ENCODE measurements at regions of chr11 and their contacts with region 1.

Region 1: DNA sequence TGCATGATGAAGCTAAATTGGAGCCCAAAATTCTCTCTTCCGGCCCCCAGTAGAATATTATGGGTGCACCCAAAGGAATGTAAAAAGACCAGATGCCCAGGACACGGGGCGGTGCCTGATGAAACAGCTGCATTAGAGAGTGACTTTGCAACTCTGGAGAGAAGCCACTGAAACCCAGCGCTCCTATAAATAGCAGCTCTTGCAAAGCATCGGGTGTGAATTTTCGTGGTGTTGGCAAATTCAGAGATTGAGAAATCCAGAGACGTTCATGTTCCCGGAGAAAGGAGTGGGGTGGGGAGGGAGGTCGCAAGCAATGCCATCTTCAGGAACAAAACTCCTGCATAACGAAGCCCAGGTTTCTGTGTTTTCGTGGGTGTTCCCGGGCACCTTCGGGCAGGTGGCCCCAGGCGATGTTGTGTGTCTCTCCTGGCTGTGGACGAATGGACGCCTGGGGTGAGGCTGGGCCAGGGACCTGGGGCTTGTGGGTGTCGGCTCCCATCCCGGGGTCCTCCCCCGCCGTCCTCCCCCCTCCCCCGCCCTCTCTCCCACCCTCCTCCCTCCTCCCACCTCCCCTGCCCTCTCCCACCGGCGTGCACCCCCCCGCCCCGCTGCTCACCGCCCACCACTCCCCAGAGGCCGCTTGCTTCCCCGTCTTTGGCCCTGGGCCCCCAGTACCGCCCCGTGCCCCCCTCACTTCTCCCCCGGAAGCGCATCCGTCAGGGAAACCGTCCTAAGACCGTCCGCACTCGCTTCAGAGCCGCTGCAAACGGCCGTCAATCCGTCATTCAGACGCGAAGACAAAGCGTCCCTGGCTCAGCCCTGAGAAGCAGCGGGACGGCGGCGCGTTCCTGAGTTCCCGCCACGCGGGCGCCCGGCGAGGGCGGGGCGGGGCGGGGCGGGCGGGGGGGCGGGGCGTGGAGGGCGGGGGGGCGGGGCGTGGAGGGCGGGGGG is 26.7 kb upstream of the TOLLIP start:
- DNase-seq: peak in 6 of 10 donors; percentile 56 to 79 (median 64)
- H3K4me3 ChIP-seq: peak overlapping the region; percentile 30 to 73 (median 57)
- H3K27ac ChIP-seq: peak overlapping the region in 48 of 59 donors; percentile 22 to 90 (median 75)
- H3K27me3 ChIP-seq: no peaks in the 10 kb centered on the region
- CTCF ChIP-seq: no peak

Region 2: DNA sequence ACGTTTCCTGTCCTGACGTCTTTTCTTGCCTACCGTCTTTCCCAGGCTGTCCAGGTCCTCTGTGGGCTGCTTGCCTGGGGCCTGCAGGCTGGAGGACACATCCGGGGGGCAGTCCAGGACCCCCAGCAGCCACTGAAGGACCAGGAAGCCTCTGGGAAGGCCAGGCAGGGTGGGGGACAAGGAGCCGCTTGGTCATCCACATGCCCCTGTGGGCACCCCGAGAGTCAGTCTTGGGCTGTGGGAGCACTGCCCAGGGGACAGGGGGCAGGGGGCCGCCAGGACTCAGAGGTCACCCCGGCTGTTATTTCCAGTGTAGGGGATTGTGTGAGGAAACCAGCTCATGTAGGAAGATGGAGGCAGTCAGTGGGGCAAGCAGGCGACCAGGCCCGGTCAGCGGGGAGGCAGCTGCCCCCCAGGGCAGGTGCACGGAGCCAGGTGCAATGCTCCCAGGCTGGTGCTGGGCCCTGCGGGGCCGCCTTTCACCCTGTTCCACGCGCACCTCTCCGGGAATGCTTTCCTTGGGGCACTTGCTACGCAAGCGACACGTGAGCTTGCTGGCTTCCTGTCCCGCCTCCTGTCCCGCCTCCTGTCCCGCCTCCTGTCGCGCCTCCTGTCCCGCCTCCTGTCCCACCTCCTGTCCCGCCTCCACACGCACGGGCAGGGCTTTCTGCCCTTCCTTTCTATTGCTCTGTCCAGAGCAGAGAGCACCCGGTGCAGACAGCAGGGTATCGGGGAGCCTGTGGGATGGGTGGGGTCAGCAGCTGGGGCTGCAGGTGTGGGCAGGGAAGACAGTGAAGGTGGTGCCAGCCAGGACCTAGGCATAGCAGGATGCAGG is 73.7 kb before region 1 on chr11:
- intact Hi-C with region 1: no loop called
- DNase-seq: peak; percentile 91 to 98 (median 96)
- H3K4me3 ChIP-seq: peak overlapping the region; percentile 38 to 97 (median 68)
- H3K27ac ChIP-seq: peak overlapping the region in 56 of 59 donors; percentile 4 to 92 (median 78)
- H3K27me3 ChIP-seq: no peaks in the 10 kb centered on the region
- CTCF ChIP-seq: peak in 7 of 56 donors; percentile 8 to 24 (median 14)

Region 3: GRCh38 chr11:1298695-1299492 is 37.2 kb before region 1 on chr11:
- intact Hi-C with region 1: loop called in 1 of 2 experiments (anchors 5 kb)
- DNase-seq: peak in 8 of 10 donors; percentile 52 to 90 (median 85)
- H3K4me3 ChIP-seq: peak overlapping the region in 25 of 59 donors; percentile 1 to 44 (median 18)
- H3K27ac ChIP-seq: peak overlapping the region; percentile 8 to 98 (median 84)
- H3K27me3 ChIP-seq: no peaks in the 10 kb centered on the region
- CTCF ChIP-seq: no peak

Region 4: DNA sequence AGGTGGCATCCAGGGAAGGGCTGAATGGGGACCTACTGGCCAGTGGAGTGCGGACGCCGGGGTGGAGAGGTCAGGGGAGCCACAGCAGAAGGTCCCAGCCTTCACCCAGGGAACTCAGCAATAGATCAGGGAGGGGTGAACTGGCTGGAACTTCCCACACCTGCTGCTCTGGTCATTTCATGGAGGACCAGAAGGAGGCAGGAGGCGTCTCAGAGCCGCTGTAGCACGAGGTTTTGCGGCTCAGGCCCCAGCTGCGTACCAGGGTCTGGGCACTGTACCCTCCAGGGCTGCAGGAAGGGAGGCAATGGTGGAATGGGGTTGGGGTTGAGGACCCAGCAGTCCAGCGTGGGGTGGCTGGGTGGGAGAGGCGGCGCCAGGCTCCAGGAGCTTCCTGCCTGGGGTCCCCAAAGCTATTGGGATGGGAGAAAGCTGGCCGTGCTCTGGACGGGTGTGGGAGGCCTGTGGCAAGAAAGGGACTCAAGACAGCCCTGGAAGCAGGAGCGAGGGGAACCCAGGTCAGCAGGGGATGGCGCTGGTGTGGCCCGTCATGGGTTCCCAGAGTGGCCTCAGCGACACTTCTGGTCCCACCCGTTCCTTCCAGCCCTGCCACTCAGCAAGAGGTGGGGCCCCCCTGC is 33.4 kb after region 1 on chr11:
- intact Hi-C with region 1: no loop called
- DNase-seq: no peak
- H3K4me3 ChIP-seq: no peak overlapping the region
- H3K27ac ChIP-seq: no peak overlapping the region
- H3K27me3 ChIP-seq: no peaks in the 10 kb centered on the region
- CTCF ChIP-seq: no peak